Activated T-helper 1 cell treated with anti-CD3 and anti-CD28 coated beads, Interleukin-12 subunit alpha, Interleukin-12 subunit beta, Interleukin-2, Interleukin-4 antibody, amounts not matched to agents 30 ng/mL and 10 ng/mL and 1 ng/mL, durations not matched to agents 14 hours and 24 hours and 36 hours (primary cell): ENCODE measurements at regions of chr19 and their contacts with region 1.

Region 1: GRCh38 chr19:10388957-10389356 is 8.6 kb upstream of the TYK2 start:
- DNase-seq: peak; percentile 61
- H3K4me3 Mint-ChIP-seq: no peak overlapping the region
- H3K27ac Mint-ChIP-seq: no peak overlapping the region
- H3K4me1 Mint-ChIP-seq: peaks cover 11% of the 10 kb centered on the region
- H3K27me3 Mint-ChIP-seq: no peaks in the 10 kb centered on the region

Region 2: GRCh38 chr19:9934132-9934950 is 454.6 kb before region 1 on chr19:
- intact Hi-C with region 1: loop called (anchors 1 kb)
- DNase-seq: peak; percentile 69
- H3K4me3 Mint-ChIP-seq: no peak overlapping the region
- H3K27ac Mint-ChIP-seq: no peak overlapping the region
- H3K4me1 Mint-ChIP-seq: peaks cover 26% of the 10 kb centered on the region
- H3K27me3 Mint-ChIP-seq: peaks cover 48% of the 10 kb centered on the region

Region 3: GRCh38 chr19:10074153-10074552 is 314.8 kb before region 1 on chr19:
- intact Hi-C with region 1: loop called (anchors 1 kb)
- DNase-seq: peak; percentile 22
- H3K4me3 Mint-ChIP-seq: no peak overlapping the region
- H3K27ac Mint-ChIP-seq: no peak overlapping the region
- H3K4me1 Mint-ChIP-seq: no peaks in the 10 kb centered on the region
- H3K27me3 Mint-ChIP-seq: peaks cover 18% of the 10 kb centered on the region

Region 4: GRCh38 chr19:10259162-10259905 is 129.6 kb before region 1 on chr19:
- intact Hi-C with region 1: loop called (anchors 1 kb)
- DNase-seq: peak; percentile 87
- H3K4me3 Mint-ChIP-seq: peak overlapping the region; percentile 68
- H3K27ac Mint-ChIP-seq: peak overlapping the region; percentile 93
- H3K4me1 Mint-ChIP-seq: peaks cover 21% of the 10 kb centered on the region
- H3K27me3 Mint-ChIP-seq: no peaks in the 10 kb centered on the region

Region 5: GRCh38 chr19:10269333-10270179 is 119.4 kb before region 1 on chr19:
- intact Hi-C with region 1: loop called (anchors 1 kb)
- DNase-seq: peak; percentile 84
- H3K4me3 Mint-ChIP-seq: peak overlapping the region; percentile 94
- H3K27ac Mint-ChIP-seq: peak overlapping the region; percentile 94
- H3K4me1 Mint-ChIP-seq: peaks cover 28% of the 10 kb centered on the region
- H3K27me3 Mint-ChIP-seq: no peaks in the 10 kb centered on the region

Region 6: DNA sequence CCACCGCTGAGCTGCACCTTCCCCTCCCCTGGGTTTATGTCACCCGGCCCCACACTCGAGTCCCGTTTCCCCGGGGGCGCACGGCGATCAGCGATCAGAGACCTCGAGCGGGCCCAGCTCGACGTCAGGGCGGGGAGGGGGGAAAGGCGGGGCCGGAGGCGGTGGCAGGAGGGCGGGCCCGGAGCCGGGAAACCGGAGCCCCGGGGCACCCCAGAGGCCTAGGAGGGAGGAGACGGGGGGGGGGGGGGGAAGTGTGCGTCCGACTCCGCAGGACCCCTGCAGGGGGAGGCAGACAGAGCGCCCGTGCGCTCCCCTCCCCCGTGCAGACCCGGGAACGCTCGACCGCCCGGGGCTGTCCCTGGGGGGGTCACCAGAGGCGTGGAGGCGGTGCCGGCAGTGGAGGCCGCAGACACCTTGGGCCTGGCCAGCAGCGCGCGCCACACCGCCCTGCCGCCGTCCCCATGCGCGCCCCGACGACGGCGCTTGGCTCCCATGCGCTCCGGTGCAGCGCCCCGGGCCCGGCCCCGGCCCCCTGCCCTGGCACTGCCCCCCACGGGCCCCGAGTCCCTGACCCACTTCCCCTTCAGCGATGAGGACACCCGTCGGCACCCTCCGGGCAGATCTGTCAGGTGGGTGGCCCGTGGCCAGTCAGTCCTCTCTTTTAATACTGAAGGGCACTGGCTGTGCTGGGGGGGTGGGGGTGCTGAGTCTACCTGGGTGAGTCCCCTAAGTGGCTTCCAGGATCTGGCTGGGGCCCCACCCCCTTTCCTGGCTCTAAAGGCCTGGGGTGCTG is 43.2 kb after region 1 on chr19:
- intact Hi-C with region 1: loop called (anchors 1 kb)
- DNase-seq: no peak
- H3K4me3 Mint-ChIP-seq: peak overlapping the region; percentile 82
- H3K27ac Mint-ChIP-seq: peak overlapping the region; percentile 91
- H3K4me1 Mint-ChIP-seq: peaks cover 66% of the 10 kb centered on the region
- H3K27me3 Mint-ChIP-seq: peaks cover 20% of the 10 kb centered on the region

Region 7: DNA sequence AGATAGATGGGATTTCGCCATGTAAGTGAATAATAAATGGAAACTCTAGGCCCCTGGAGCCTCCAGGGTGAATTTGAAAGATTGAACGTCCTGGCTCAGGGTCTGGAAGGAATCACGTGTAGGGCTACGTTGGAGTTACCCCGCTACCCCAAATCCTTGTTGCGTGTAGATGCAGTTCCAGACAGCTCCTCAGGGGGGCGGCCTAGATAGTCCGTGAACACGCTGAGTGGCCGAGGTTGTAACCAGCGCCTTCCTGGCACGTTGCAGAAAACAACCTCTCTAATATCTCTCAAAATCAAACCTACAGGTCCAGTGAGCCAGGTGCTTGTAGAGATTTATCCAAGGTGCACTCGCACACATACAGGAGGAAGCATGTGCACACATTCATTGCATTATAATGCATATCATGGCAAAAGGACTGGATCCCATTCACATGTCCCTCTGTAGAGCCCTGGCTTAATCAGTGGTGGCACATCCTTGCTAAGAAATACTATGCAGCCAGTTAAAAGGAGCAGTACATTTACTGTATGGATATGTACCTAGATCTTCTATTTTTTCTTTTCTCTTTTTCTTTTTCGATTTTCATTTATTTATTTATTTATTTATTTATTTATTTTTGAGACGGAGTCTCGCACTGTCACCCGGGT is 116.7 kb after region 1 on chr19:
- intact Hi-C with region 1: no loop called
- DNase-seq: peak; percentile 75
- H3K4me3 Mint-ChIP-seq: peak overlapping the region; percentile 53
- H3K27ac Mint-ChIP-seq: peak overlapping the region; percentile 58
- H3K4me1 Mint-ChIP-seq: peaks cover 19% of the 10 kb centered on the region
- H3K27me3 Mint-ChIP-seq: no peaks in the 10 kb centered on the region

Region 8: GRCh38 chr19:10543420-10544241 is 154.7 kb after region 1 on chr19 and contains the start of gene ATG4D:
- intact Hi-C with region 1: no loop called
- DNase-seq: peak; percentile 71
- H3K4me3 Mint-ChIP-seq: peak within 1 kb of the TSS; percentile 85
- H3K27ac Mint-ChIP-seq: peak within 1 kb of the TSS; percentile 82
- H3K4me1 Mint-ChIP-seq: peaks cover 7% of the 10 kb centered on the region
- H3K27me3 Mint-ChIP-seq: peaks cover 25% of the 10 kb centered on the region
- total RNA-seq, gene ATG4D: 37.3 and 40.7 TPM in 2 replicates